Activated CD4-positive, alpha-beta T cell treated with anti-CD3 and anti-CD28 coated beads, Interleukin-2, amount 10 ng/mL, durations not matched to agents 24 days and 14 days (primary cell): ENCODE measurements at regions of chr6 and their contacts with region 1.

Region 1: GRCh38 chr6:105587349-105588122 is 184.7 kb upstream of the PREP start:
- DNase-seq: peak; percentile 74
- H3K4me3 Mint-ChIP-seq: peak overlapping the region; percentile 70
- H3K27ac Mint-ChIP-seq: peak overlapping the region; percentile 77
- H3K4me1 Mint-ChIP-seq: peaks cover 42% of the 10 kb centered on the region
- H3K27me3 Mint-ChIP-seq: peaks cover 7% of the 10 kb centered on the region

Region 2: DNA sequence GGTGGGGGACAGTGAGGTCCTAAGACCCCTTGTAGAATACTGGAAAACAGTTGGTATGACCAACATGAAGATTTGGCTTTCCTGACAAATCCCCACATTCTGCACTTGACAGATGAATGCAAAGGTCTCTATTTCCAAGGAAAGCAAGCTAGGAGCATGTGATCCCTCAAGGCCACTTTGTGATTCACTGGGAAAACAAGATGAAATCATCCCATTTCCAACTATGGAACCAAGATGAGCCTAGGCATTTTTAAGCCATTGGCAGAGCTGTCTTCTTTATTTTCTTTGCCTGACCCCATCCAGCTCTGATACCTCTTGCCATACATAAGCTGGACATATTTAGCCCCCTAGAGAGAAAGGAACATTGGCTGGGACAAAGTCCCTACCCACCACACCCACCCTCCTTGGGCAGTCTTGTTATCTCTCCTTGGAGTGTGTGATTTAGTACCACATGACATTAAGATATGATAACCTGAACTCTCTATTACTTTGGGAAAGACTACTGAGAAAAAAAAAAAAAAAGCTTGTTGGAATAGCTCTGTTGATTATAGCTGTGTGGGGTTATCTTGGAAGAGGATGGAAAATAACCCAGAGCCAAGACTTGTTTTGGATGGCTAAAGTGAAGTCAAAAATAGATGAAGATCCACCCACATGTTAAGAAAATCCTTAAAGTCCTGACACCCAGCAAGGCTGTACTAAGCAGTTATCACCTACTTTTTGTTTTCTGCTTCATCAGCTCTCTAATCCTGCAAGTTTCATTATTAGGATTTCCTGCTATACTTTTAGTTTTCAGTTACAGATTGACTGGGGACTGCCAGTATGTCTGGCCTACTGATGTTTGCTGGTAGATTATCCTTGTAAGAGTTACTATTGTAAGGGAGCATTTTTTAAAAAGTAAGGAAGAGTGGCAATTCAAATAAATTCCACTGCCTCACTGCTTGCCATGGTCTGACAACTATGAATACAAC is 94.5 kb before region 1 on chr6:
- intact Hi-C with region 1: loop called (anchors 10 kb)
- DNase-seq: no peak
- H3K4me3 Mint-ChIP-seq: no peak overlapping the region
- H3K27ac Mint-ChIP-seq: peak overlapping the region; percentile 30
- H3K4me1 Mint-ChIP-seq: peaks cover 28% of the 10 kb centered on the region
- H3K27me3 Mint-ChIP-seq: peaks cover 2% of the 10 kb centered on the region

Region 3: GRCh38 chr6:105793130-105793529 is 205.6 kb after region 1 on chr6:
- intact Hi-C with region 1: no loop called
- DNase-seq: peak; percentile 72
- H3K4me3 Mint-ChIP-seq: peak overlapping the region; percentile 54
- H3K27ac Mint-ChIP-seq: peak overlapping the region; percentile 76
- H3K4me1 Mint-ChIP-seq: peaks cover 74% of the 10 kb centered on the region
- H3K27me3 Mint-ChIP-seq: no peaks in the 10 kb centered on the region